ENCODE measurements at regions of chr6 and their contacts with region 1.

Region 1: GRCh38 chr6:5174244-5174643 is 86.5 kb downstream of the LYRM4 start:
- DNase-seq: no peak

Region 2: GRCh38 chr6:5125152-5126006 is 48.9 kb before region 1 on chr6:
- intact Hi-C with region 1: no loop called
- DNase-seq: no peak

Region 3: DNA sequence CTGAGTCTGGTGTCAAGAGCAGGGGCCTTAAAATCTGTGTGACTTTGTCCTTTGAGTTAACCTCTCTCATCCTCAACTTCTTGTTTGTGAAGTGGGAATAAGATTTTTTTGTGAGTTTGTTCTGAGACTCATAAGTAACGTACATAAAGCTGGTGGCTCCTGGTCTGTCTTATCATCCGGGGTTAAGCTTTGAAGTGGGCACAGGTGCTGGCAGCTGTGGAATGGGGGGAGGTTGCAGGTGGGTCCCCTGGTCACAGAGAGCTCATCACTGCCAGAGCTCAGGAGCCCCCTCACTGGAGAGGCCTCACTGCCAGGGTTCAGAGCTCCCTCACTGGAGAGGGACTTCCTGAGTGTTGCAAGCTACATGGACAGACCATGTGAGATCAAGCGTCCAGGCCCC is 658.4 kb after region 1 on chr6:
- intact Hi-C with region 1: loop called in 1 of 2 experiments (anchors 5 kb)
- DNase-seq: no peak

Region 4: GRCh38 chr6:6105472-6106036 is 931.3 kb after region 1 on chr6:
- intact Hi-C with region 1: loop called in 1 of 2 experiments (anchors 5 kb)
- DNase-seq: no peak

Measured in posterior vena cava (tissue), 2 donors.